ENCODE measurements at regions of chr13 and their contacts with region 1.

Region 1: GRCh38 chr13:75219479-75220237 is 262.3 kb downstream of the TBC1D4 start:
- DNase-seq: peak; percentile 95
- H3K4me3 Mint-ChIP-seq: peak overlapping the region; percentile 66
- H3K27ac Mint-ChIP-seq: no peak overlapping the region
- H3K4me1 Mint-ChIP-seq: peaks cover 6% of the 10 kb centered on the region
- H3K27me3 Mint-ChIP-seq: peaks cover 42% of the 10 kb centered on the region

Region 2: DNA sequence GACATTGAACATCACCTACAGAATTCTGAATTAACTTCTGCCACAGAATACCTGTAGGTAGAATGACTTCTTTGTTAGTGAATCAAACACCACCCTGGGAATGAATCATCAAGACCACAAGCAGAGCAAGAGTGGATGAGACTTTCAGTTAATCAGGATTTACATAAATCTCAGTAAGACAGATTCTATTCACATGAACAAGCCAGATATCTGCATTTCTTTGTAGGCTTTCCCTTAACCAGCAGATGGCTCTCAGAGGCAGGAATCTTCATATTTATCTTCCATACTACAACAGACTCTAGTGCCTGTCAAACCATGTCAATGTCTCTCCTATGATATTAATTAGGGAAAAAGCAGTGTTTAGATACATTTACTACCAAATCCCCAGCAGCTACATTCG is 1497.5 kb before region 1 on chr13:
- intact Hi-C with region 1: loop called (anchors 10 kb)
- DNase-seq: no peak
- H3K4me3 Mint-ChIP-seq: no peak overlapping the region
- H3K27ac Mint-ChIP-seq: no peak overlapping the region
- H3K4me1 Mint-ChIP-seq: peaks cover 17% of the 10 kb centered on the region
- H3K27me3 Mint-ChIP-seq: no peaks in the 10 kb centered on the region

Region 3: GRCh38 chr13:73835138-73835721 is 1384.4 kb before region 1 on chr13:
- intact Hi-C with region 1: loop called (anchors 5 kb)
- DNase-seq: no peak
- H3K4me3 Mint-ChIP-seq: no peak overlapping the region
- H3K27ac Mint-ChIP-seq: no peak overlapping the region
- H3K4me1 Mint-ChIP-seq: peaks cover 5% of the 10 kb centered on the region
- H3K27me3 Mint-ChIP-seq: no peaks in the 10 kb centered on the region

Region 4: DNA sequence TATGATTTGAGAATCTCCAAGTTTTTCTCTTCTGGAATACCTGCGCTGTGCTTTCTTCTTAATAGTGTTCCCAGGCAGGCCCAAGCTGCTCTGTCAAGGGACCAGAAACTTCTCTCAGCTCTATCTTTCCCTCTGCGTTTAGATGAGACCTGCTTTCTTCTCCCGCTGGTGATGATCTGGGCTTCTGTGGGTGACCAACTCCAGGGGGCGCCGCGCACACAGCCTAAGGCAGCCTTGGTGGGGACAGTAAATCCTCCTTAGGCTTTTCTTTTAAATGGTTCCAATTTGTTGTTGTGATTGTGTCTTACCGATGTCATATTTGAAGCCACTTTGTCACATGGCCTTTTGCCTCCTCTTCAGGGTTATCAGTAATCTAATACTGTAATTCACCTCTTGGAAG is 646.0 kb before region 1 on chr13:
- intact Hi-C with region 1: loop called (anchors 2 kb)
- DNase-seq: no peak
- H3K4me3 Mint-ChIP-seq: no peak overlapping the region
- H3K27ac Mint-ChIP-seq: no peak overlapping the region
- H3K4me1 Mint-ChIP-seq: peaks cover 7% of the 10 kb centered on the region
- H3K27me3 Mint-ChIP-seq: peaks cover 42% of the 10 kb centered on the region

Region 5: GRCh38 chr13:75038393-75039113 is 181.1 kb before region 1 on chr13:
- intact Hi-C with region 1: no loop called
- DNase-seq: no peak
- H3K4me3 Mint-ChIP-seq: no peak overlapping the region
- H3K27ac Mint-ChIP-seq: no peak overlapping the region
- H3K4me1 Mint-ChIP-seq: no peaks in the 10 kb centered on the region
- H3K27me3 Mint-ChIP-seq: no peaks in the 10 kb centered on the region